ENCODE measurements at regions of chr14 and their contacts with region 1.

Region 1: GRCh38 chr14:75230140-75231045 is 48.2 kb upstream of the FOS start:
- DNase-seq: no peak
- ATAC-seq: peak; percentile 72
- H3K4me3 ChIP-seq: no peak overlapping the region
- H3K27ac ChIP-seq: peak overlapping the region in 1 of 2 donors; percentile 48
- H3K4me1 ChIP-seq: peaks cover 11 to 46% of the 10 kb centered on the region in 2 donors
- H3K27me3 ChIP-seq: no peaks in the 10 kb centered on the region
- CTCF ChIP-seq: peak in 1 of 2 donors; percentile 34

Region 2: GRCh38 chr14:75188520-75189268 is 41.7 kb before region 1 on chr14:
- intact Hi-C with region 1: loop called in 1 of 2 experiments (anchors 10 kb)
- DNase-seq: peak in 1 of 4 donors; percentile 46
- ATAC-seq: peak; percentile 69
- H3K4me3 ChIP-seq: no peak overlapping the region
- H3K27ac ChIP-seq: peak overlapping the region in 1 of 2 donors; percentile 90
- H3K4me1 ChIP-seq: peaks cover 0 to 35% of the 10 kb centered on the region in 2 donors
- H3K27me3 ChIP-seq: no peaks in the 10 kb centered on the region
- CTCF ChIP-seq: no peak